HCT116 (cell line): ENCODE measurements at regions of chr3 and their contacts with region 1.

Region 1: DNA sequence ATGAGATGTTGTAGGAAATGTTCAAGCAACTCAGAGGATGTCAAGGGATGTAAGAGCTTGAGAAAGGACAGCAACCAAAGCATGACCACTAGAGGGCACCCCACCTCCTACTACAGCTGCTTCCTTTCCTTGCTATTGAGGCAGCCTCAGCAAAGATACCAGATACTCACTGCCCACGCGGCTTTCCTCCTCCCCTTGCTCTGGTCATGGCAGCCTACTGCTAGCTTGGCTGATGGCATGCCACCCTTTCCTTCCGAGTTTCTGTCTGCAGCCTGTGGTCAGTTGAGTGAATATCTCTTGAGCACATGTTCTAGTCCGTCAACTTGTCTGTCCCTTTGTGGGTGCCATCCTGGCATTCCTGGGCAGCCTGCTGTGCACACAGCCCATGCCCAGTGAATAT is 4.4 kb upstream of the CXCR6 start:
- DNase-seq: peak; percentile 69
- ATAC-seq: peak; percentile 92
- H3K4me3 ChIP-seq: no peak overlapping the region
- H3K27ac ChIP-seq: no peak overlapping the region
- H3K4me1 ChIP-seq: peaks cover 0 to 6% of the 10 kb centered on the region in 2 experiments; a peak in 1 of 4 replicates
- H3K27me3 ChIP-seq: no peaks in the 10 kb centered on the region
- CTCF ChIP-seq: peak; percentile 84 to 92 (median 91)
- POLR2A ChIP-seq: no peak
- RAD21 ChIP-seq: peak; percentile 82

Region 2: DNA sequence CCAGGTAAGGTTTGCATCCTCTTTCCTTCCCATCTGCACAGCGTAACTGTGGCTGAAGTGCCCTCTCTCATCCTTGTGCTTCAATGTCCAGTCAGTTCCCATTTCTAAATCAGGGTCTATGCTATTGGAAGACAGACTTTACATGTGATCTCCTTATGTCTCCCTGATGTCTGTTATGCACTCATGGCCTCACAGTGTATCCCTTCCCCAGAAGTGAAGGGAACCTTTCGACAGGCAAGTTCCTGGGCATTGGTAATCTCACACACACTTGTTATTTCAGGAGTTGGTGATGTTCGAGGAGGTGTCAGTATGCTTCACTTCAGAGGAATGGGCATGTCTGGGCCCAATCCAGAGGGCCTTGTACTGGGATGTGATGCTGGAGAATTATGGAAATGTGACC is 1306.7 kb before region 1 on chr3:
- CTCF ChIA-PET with region 1: no interaction called
- POLR2A ChIA-PET with region 1: no interaction called
- RAD21 ChIA-PET with region 1: no interaction called
- intact Hi-C with region 1: no loop called
- DNase-seq: no peak
- ATAC-seq: no peak
- H3K4me3 ChIP-seq: no peak overlapping the region
- H3K27ac ChIP-seq: no peak overlapping the region
- H3K4me1 ChIP-seq: no peaks in the 10 kb centered on the region
- H3K27me3 ChIP-seq: no peaks in the 10 kb centered on the region
- CTCF ChIP-seq: no peak
- POLR2A ChIP-seq: no peak
- RAD21 ChIP-seq: no peak

Region 3: GRCh38 chr3:45795882-45796765 is 142.7 kb before region 1 on chr3 and contains the start of gene SLC6A20:
- CTCF ChIA-PET with region 1: no interaction called
- POLR2A ChIA-PET with region 1: no interaction called
- RAD21 ChIA-PET with region 1: no interaction called
- intact Hi-C with region 1: no loop called
- DNase-seq: no peak
- ATAC-seq: peak; percentile 59
- H3K4me3 ChIP-seq: peak within 1 kb of the TSS; percentile 45 to 58
- H3K27ac ChIP-seq: peak within 1 kb of the TSS; percentile 29; the same call in 1 of the 2 replicates
- H3K4me1 ChIP-seq: peaks cover 5 to 22% of the 10 kb centered on the region in 2 experiments; a peak in 2 of 4 replicates
- H3K27me3 ChIP-seq: no peaks in the 10 kb centered on the region
- CTCF ChIP-seq: no peak
- POLR2A ChIP-seq: no peak
- RAD21 ChIP-seq: no peak
- total RNA-seq, gene SLC6A20: 0.89 TPM

Region 4: GRCh38 chr3:46143951-46144473 is 205.1 kb after region 1 on chr3:
- CTCF ChIA-PET with region 1: no interaction called
- POLR2A ChIA-PET with region 1: no interaction called
- RAD21 ChIA-PET with region 1: no interaction called
- intact Hi-C with region 1: no loop called
- DNase-seq: no peak
- ATAC-seq: no peak
- H3K4me3 ChIP-seq: no peak overlapping the region
- H3K27ac ChIP-seq: no peak overlapping the region
- H3K4me1 ChIP-seq: no peaks in the 10 kb centered on the region
- H3K27me3 ChIP-seq: no peaks in the 10 kb centered on the region
- CTCF ChIP-seq: no peak
- POLR2A ChIP-seq: no peak
- RAD21 ChIP-seq: no peak

Region 5: DNA sequence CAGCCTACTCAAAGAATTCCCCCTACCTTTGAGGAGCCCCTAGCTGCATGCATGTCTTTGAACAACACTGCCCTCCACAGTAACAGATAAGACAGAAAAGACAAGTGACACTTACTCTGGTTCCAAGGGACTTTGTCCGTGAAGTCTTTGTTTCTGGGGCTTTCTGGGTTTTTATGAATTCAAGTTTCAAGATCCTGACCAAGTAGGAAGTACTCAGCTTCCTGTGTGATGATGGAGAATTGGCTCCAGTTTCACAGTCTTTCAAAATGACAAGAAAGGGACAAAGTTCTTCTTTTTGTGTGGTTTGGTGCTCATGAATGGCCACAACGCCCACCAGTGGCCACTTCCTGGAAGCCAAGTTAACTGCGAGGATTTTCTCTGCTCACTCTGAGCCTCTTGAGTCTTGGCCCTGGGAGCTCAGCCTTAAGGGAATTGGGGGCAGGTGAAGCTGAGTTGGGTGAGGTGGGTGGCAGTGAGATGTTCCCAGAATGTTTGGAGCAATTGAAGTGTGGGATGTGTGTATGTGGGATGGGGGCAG is 269.4 kb after region 1 on chr3 and contains the start of gene CCR1:
- CTCF ChIA-PET with region 1: interaction called, 11 read pairs
- POLR2A ChIA-PET with region 1: no interaction called
- RAD21 ChIA-PET with region 1: no interaction called
- intact Hi-C with region 1: loop called (anchors 10 kb)
- DNase-seq: peak; percentile 45
- ATAC-seq: peak; percentile 91
- H3K4me3 ChIP-seq: no peak within 1 kb of the TSS
- H3K27ac ChIP-seq: no peak within 1 kb of the TSS
- H3K4me1 ChIP-seq: peaks cover 0 to 9% of the 10 kb centered on the region in 2 experiments; a peak in 2 of 4 replicates
- H3K27me3 ChIP-seq: 0 out of 2 replicates have a peak, but pooled peaks cover 3% of the 10 kb centered on the region
- CTCF ChIP-seq: peak; percentile 75 to 91 (median 83)
- POLR2A ChIP-seq: no peak
- RAD21 ChIP-seq: peak; percentile 88
- total RNA-seq, gene CCR1: 0.10 TPM

Region 6: GRCh38 chr3:46214751-46215352 is 276.0 kb after region 1 on chr3:
- CTCF ChIA-PET with region 1: no interaction called
- POLR2A ChIA-PET with region 1: no interaction called
- RAD21 ChIA-PET with region 1: no interaction called
- intact Hi-C with region 1: loop called (anchors 10 kb)
- DNase-seq: no peak
- ATAC-seq: peak; percentile 76
- H3K4me3 ChIP-seq: no peak overlapping the region
- H3K27ac ChIP-seq: no peak overlapping the region
- H3K4me1 ChIP-seq: no peaks in the 10 kb centered on the region
- H3K27me3 ChIP-seq: peaks cover 8% of the 10 kb centered on the region; the same call in 1 of the 2 replicates
- CTCF ChIP-seq: peak; percentile 25 to 50 (median 47); a peak in 4 of 6 replicates
- POLR2A ChIP-seq: no peak
- RAD21 ChIP-seq: peak; percentile 48

Region 7: GRCh38 chr3:46378426-46378942 is 439.6 kb after region 1 on chr3:
- CTCF ChIA-PET with region 1: interaction called, 18 read pairs
- POLR2A ChIA-PET with region 1: interaction called, 3 read pairs
- RAD21 ChIA-PET with region 1: interaction called in 1 of 2 experiments, 3 read pairs
- intact Hi-C with region 1: loop called (anchors 1 kb)
- DNase-seq: peak; percentile 48
- ATAC-seq: peak; percentile 97
- H3K4me3 ChIP-seq: no peak overlapping the region
- H3K27ac ChIP-seq: no peak overlapping the region
- H3K4me1 ChIP-seq: peaks cover 0 to 3% of the 10 kb centered on the region in 2 experiments; a peak in 1 of 4 replicates
- H3K27me3 ChIP-seq: peaks cover 27% of the 10 kb centered on the region
- CTCF ChIP-seq: peak; percentile 66 to 92 (median 87)
- POLR2A ChIP-seq: no peak
- RAD21 ChIP-seq: peak; percentile 85